T-cell (primary cell): ENCODE measurements at regions of chr15 and their contacts with region 1.

Region 1: DNA sequence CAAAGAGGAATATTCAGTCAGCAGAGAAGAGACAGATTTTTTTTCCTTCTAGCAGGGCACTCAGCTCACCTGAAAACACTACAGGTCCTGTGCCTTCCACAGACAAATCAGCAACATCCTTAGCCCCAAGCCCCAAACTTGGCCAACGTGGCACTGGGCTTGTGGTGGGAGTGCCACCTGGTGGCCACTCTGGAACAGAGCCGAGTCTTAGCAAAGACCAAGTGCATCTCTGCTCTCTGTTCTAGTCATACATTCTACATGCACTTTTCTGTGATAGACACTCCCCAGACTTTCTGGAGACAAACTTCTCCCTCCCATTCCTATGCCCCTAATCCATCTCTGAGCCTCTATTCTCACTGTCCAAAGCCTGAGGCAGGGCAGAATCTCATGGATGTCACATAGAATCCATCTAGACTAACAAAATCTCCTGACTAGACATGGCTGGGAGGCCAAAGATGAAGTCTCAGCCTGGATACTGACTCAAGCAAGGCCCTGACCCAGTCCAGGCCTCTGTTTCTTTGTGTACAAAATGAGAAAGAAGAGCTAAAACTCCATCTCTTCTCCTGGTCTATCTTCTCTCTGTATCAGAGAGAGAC is 5.1 kb upstream of the SEMA7A start:
- DNase-seq: peak; percentile 41 to 86 (median 67)
- ATAC-seq: peak; percentile 63 to 75 (median 69)
- H3K4me3 ChIP-seq: no peak overlapping the region
- H3K4me3 Mint-ChIP-seq: no peak overlapping the region
- H3K27ac ChIP-seq: no peak overlapping the region
- H3K27ac Mint-ChIP-seq: no peak overlapping the region
- H3K4me1 ChIP-seq: peaks cover 3 to 18% of the 10 kb centered on the region in 2 experiments
- H3K4me1 Mint-ChIP-seq: peaks cover 9 to 22% (median 20%) of the 10 kb centered on the region in 3 donors
- H3K27me3 ChIP-seq: no peaks in the 10 kb centered on the region
- H3K27me3 Mint-ChIP-seq: no peaks in the 10 kb centered on the region

Region 2: GRCh38 chr15:74373731-74374647 is 64.8 kb before region 1 on chr15:
- CTCF ChIA-PET with region 1: interaction called, 5 to 25 read pairs
- POLR2A ChIA-PET with region 1: no interaction called
- DNase-seq: peak; percentile 87 to 97 (median 94)
- ATAC-seq: peak; percentile 94 to 97 (median 97)
- H3K4me3 ChIP-seq: peak overlapping the region; percentile 65 to 98
- H3K4me3 Mint-ChIP-seq: peak overlapping the region; percentile 80 to 86 (median 82)
- H3K27ac ChIP-seq: peak overlapping the region; percentile 64
- H3K27ac Mint-ChIP-seq: peak overlapping the region; percentile 36 to 65
- H3K4me1 ChIP-seq: peaks cover 6 to 25% of the 10 kb centered on the region in 2 experiments
- H3K4me1 Mint-ChIP-seq: peaks cover 14 to 23% (median 17%) of the 10 kb centered on the region in 3 donors
- H3K27me3 ChIP-seq: peaks cover 2 to 13% of the 10 kb centered on the region in 2 experiments
- H3K27me3 Mint-ChIP-seq: peaks cover 6 to 12% of the 10 kb centered on the region in 2 donors

Region 3: DNA sequence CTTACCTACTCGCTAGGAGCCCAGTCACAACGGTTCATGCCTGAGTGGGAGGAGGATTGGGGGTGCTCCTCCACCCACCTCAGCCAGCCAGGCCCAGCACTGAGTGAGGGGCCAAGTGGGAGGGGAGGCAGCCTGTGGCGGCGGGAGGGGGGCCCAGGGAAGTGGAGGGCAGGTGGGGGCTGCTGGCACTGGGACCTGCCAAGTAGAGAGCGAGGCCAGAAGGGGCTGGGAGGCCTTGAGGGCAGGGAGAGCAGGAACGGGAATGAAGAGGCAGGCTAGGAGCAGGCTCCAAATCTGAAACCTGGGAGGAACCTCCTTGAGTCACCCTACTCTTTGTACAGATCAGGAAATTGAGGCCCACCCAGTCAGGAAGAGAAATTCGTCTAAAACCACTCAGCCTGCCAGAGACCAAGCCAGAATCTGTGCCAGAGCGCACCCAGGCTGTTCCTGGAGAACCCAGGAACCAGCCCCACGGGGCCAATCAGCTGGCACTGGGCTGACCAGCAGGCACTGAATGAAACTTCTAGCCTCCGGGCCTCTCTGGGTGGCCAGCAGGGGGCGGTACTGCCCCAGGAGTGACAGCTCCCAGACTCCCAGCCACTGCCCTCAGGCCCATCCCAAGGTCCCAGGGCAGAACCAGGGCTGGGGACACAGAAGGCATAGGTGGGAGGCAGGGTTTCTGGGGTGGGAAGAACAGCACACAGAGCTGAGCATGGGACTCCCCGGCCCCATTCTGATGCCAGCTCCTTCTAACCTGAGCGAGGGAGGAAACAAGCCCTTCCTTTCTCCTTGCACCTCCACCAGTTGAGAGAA is 56.6 kb before region 1 on chr15:
- CTCF ChIA-PET with region 1: interaction called, 7 to 11 read pairs
- POLR2A ChIA-PET with region 1: no interaction called
- DNase-seq: peak in 34 of 35 experiments; percentile 19 to 85 (median 62)
- ATAC-seq: peak; percentile 63 to 72 (median 69)
- H3K4me3 ChIP-seq: no peak overlapping the region
- H3K4me3 Mint-ChIP-seq: no peak overlapping the region
- H3K27ac ChIP-seq: no peak overlapping the region
- H3K27ac Mint-ChIP-seq: no peak overlapping the region
- H3K4me1 ChIP-seq: peaks cover 5 to 46% of the 10 kb centered on the region in 2 experiments
- H3K4me1 Mint-ChIP-seq: peaks cover 28 to 33% (median 33%) of the 10 kb centered on the region in 3 donors
- H3K27me3 ChIP-seq: peaks cover 0 to 8% of the 10 kb centered on the region in 2 experiments
- H3K27me3 Mint-ChIP-seq: no peaks in the 10 kb centered on the region

Region 4: GRCh38 chr15:74453925-74454763 is 15.3 kb after region 1 on chr15:
- CTCF ChIA-PET with region 1: interaction called, 3 to 10 read pairs
- POLR2A ChIA-PET with region 1: no interaction called
- DNase-seq: no peak
- ATAC-seq: peak; percentile 40 to 62 (median 53)
- H3K4me3 ChIP-seq: no peak overlapping the region
- H3K4me3 Mint-ChIP-seq: peak overlapping the region in 1 of 3 donors; percentile 11
- H3K27ac ChIP-seq: no peak overlapping the region
- H3K27ac Mint-ChIP-seq: peak overlapping the region; percentile 5 to 73
- H3K4me1 ChIP-seq: peaks cover 2 to 8% of the 10 kb centered on the region in 2 experiments
- H3K4me1 Mint-ChIP-seq: peaks cover 28 to 29% (median 29%) of the 10 kb centered on the region in 3 donors
- H3K27me3 ChIP-seq: no peaks in the 10 kb centered on the region
- H3K27me3 Mint-ChIP-seq: no peaks in the 10 kb centered on the region